ENCODE measurements at regions of chr4 and their contacts with region 1.

Region 1: DNA sequence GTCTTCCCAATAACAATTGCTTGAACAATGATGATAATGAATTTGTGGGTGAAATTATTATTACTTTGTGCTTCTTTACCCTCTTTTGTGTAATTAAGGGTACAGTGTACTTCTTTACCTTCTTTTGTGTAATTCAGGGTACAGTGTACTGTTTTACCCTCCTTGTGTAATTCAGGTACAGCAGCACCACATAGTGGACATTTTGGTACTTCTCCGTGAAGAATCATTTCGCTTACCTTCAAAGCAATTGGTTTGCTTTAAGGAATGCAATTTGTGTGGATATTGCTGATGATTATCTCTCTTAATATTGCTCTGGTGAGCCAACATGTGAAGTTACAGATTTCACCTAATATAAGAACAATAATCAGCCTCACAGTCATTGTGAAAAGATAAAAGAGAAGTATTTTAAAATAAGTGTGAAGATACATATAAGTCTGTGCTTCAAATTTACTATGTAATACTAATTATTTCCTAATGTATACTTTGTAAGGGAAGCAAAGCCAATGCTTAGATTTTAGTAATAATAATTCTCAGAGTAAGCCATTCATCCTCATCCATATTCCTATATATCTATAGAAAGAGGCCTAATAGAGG is 27.2 kb upstream of the SEC24B start:
- DNase-seq: peak; percentile 34
- H3K4me3 ChIP-seq: no peak overlapping the region
- H3K27ac ChIP-seq: no peak overlapping the region
- H3K27me3 ChIP-seq: no peaks in the 10 kb centered on the region
- CTCF ChIP-seq: peak; percentile 75

Region 2: GRCh38 chr4:108683479-108683878 is 723.0 kb before region 1 on chr4:
- CTCF ChIA-PET with region 1: interaction called, 37 read pairs
- POLR2A ChIA-PET with region 1: no interaction called
- DNase-seq: no peak
- H3K4me3 ChIP-seq: no peak overlapping the region
- H3K27ac ChIP-seq: no peak overlapping the region
- H3K27me3 ChIP-seq: no peaks in the 10 kb centered on the region
- CTCF ChIP-seq: peak; percentile 55

Region 3: DNA sequence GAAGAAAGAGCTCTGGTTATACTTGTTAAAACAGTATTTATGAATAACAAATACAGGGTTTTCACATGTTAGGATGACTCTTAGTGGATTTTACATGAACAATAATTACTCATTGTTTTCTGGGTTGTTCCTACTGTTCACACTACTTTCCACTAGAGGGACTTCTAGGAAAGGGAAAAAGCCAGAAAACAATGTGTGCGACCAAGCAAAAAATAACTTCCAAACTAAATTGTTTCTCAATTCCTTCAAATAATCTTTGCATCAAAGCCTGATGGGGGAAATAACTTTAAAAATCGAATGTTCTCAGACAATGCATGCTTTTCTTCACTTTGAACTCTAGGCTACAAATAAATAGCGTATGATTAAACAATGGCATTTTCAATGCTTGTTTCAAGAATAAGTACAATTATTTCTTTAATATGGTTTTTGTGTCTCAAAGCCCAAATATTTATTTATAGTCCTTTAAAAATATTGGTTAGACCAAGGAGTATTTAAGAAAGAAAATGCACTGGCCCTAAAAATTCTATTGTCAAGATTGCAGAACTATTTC is 571.5 kb before region 1 on chr4:
- CTCF ChIA-PET with region 1: interaction called, 16 read pairs
- POLR2A ChIA-PET with region 1: no interaction called
- DNase-seq: peak; percentile 32
- H3K4me3 ChIP-seq: no peak overlapping the region
- H3K27ac ChIP-seq: no peak overlapping the region
- H3K27me3 ChIP-seq: no peaks in the 10 kb centered on the region
- CTCF ChIP-seq: peak; percentile 85

Region 4: GRCh38 chr4:109233585-109233984 is 172.8 kb before region 1 on chr4:
- CTCF ChIA-PET with region 1: no interaction called
- POLR2A ChIA-PET with region 1: no interaction called
- DNase-seq: no peak
- H3K4me3 ChIP-seq: no peak overlapping the region
- H3K27ac ChIP-seq: no peak overlapping the region
- H3K27me3 ChIP-seq: no peaks in the 10 kb centered on the region
- CTCF ChIP-seq: no peak

Region 5: GRCh38 chr4:109511414-109511813 is 105.0 kb after region 1 on chr4:
- CTCF ChIA-PET with region 1: no interaction called
- POLR2A ChIA-PET with region 1: no interaction called
- DNase-seq: no peak
- H3K4me3 ChIP-seq: no peak overlapping the region
- H3K27ac ChIP-seq: no peak overlapping the region
- H3K27me3 ChIP-seq: no peaks in the 10 kb centered on the region
- CTCF ChIP-seq: no peak